ENCODE measurements at regions of chr1 and their contacts with region 1.

Region 1: DNA sequence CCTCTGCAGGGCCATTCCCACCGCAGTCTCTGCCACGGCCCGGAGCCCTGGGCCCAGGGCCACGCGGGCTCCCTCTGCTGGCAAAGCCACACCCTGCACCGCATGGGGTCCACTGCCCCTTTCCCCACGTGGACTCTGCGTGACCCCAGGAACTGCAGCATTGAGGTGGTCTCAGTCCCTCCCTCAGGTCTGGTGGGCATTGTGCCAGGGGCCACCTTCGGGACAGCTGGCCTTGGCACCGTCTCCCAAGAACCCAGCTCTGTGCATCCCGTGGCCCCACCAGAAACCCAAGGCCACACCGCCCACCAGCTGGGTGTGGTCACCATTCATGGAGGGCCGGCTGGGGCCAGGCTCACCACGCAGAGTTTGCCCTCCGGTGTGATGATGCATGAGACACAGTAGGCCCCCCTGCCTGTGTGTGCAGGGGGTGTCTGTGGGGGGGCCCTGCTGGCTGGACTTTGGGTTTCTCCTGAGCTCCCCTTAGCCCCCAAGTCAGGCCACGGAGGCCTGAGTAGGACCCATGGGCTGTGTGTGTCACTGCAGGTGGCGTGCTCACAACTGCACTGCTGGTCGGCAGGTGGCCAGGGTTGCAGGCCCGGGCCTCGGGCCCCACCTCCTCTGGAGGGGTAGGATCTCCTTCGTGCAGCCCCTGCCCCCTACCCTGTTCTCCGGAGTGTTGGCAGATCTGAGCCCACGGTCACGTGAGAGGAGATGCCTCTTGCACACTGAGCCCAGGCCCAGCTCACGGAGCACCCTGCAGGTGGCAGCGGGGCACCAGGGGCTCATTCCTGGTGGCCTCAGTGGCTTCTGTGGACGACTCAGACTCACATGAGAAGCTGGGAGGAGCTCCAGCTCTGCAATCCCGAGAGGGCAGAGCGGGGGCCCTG is 5.8 kb downstream of the VWA1 start:
- DNase-seq: peak; percentile 67
- H3K27ac ChIP-seq: no peak overlapping the region
- CTCF ChIP-seq: peak; percentile 94

Region 2: GRCh38 chr1:1406817-1407635 is 34.2 kb before region 1 on chr1 and contains the start of gene MRPL20:
- CTCF ChIA-PET with region 1: interaction called, 15 read pairs
- POLR2A ChIA-PET with region 1: interaction called, 6 read pairs
- DNase-seq: peak; percentile 89
- H3K27ac ChIP-seq: peak within 1 kb of the TSS; percentile 82
- CTCF ChIP-seq: no peak